Cardiac septum (tissue), 1 donor: ENCODE measurements at regions of chr20 and their contacts with region 1.

Region 1: DNA sequence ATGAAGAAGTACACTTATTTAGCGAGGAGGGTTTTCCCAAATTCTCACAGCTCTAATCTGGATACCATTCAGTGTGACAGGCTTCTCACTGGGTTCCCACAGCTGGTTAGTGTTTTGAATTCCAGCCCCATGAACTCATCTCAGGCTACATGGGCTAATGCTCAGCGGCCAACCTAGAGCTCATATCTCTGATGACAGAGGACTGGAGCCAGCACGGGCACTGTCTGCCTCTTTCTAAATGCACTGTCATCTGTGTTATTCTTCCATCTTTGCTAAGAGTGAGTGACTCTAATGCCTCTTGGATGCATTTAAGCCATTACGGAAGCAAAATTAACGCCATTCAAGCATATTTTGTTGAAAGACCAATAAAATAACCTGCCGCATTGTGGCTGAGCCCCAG is 308.9 kb upstream of the JAG1 start:
- DNase-seq: peak; percentile 83

Region 2: GRCh38 chr20:10940941-10941340 is 41.8 kb before region 1 on chr20:
- intact Hi-C with region 1: no loop called
- DNase-seq: no peak

Region 3: DNA sequence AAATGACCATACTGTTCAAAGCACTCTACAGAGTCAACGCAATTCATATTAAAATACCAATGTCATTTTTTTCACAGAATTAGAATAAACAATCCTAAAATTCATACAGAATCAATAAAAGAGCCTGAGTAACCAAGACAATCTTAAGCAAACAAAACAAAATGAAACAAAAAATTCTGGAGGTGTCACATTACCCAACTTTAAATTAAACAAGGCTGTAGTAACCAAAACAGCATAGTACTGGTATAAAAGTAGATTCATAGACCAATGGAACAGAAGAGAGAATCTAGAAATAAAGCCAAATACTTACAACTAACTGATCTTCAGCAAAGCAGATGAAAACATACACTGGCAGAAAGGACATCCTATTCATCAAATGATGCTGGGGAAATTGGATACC is 38.0 kb after region 1 on chr20:
- intact Hi-C with region 1: loop called (anchors 2 kb)
- DNase-seq: no peak

Region 4: DNA sequence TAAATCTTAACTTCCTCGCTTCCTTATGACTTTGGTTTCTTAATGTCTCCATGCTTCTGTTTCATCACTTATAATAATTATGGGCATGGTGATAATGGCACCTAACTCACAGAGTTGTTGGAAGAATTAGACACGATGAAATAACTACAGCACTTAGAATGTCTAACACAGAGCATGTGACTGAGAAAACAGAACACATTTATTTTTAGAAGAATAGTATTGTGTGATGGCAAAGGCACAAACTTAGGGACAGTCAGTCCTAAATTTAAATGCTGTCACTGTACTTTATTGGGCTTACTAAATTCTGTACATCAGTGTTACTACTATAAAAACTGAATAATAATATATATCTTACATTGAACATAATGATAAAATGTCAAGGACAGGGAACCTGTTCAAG is 82.3 kb after region 1 on chr20:
- intact Hi-C with region 1: loop called (anchors 2 kb)
- DNase-seq: no peak

Region 5: DNA sequence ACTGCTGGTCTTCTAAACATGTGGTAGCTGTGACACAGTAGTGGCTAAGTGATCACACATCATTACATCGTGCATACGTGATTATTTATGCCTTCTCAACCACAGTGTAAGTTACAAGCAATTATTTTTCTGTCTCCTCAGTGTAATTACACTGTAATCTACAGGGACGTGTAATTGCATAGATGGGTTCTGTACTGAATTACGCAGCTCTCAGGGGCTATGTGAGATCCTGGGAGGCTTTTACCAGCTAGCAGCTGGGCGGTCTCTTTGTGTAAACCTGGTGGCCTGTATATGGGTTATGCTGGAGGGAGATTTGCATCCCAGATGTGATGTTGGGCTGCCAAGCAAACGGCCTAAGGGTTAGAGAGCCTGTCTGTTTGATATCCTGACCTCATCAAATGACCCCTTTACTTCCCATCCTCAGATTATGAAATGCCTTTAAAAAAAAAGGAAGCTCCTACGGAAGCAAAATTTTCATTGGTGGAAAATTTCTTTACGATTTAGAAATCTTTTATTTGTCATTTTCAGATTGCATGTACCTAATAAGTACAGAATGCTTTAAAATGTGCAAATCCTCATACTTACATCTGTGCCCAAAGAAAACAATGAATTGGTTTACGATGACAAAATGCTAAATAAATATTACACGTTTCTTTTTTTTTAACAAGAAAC is 93.9 kb after region 1 on chr20:
- intact Hi-C with region 1: no loop called
- DNase-seq: no peak

Region 6: DNA sequence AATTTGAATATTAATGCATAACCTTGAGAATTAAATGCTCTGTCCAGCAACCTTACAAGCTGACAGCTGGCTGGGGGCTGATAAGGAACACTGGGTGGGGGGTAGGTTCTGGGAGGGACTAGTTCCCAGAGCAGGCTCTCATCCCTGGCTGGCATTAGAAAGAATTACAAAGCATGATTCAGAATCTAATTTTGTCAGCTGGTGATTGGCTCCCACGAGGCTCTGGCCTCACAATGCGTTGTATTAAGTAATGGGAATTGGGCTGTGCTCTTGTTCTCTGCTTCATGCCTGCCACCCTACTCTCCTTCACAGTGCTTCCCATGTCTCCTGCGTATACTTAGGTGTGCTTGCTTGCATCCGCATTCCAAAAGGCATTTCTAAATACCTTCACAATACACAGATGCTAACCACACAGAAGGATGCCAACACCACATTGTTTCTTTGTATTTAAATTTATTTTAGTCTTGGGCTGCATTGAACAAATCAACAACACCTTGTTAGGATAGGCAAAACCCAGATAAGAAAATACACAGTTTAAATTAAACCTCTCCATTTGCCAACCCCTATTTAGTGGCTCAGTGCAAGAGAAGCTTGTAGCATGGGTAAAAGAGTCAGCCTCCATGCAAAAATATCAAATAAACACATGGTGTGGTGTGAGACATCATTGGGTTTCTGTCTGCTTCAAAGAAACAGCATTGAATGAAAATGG is 125.6 kb after region 1 on chr20:
- intact Hi-C with region 1: loop called (anchors 5 kb)
- DNase-seq: peak; percentile 75

Region 7: DNA sequence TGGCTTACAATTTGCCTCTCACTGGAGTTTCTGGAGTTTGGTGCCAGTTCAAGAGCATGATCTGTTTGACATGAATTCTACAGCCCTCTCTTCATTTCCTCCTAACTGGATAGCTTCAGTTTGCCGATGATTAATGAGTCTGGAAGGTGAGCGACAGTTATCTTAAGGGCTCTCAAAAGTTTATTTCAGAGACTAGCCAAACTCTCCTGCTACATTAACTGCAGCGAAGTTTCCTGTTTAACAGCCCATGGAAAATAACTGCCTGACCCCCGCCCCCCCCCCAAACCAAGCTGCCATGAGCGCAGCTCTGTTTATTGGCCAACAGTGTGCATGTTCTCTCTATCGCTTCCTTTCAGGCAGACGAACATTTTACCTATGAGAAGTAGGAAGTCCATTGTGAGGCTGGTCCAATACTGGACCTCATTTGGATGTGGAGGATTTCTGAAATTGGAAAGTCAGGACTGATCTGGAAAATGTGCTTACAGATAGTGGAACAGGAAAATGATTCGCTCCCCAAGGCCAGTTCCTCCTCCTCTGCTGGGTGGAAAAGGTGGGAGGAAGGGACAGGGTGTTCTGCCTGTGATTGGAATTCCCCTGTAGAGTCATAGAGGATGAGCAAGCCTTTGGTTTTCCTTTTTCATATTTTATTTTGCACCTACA is 213.3 kb after region 1 on chr20:
- intact Hi-C with region 1: loop called (anchors 5 kb)
- DNase-seq: no peak